CD4-positive, alpha-beta T cell (primary cell): ENCODE measurements at regions of chr6 and their contacts with region 1.

Region 1: DNA sequence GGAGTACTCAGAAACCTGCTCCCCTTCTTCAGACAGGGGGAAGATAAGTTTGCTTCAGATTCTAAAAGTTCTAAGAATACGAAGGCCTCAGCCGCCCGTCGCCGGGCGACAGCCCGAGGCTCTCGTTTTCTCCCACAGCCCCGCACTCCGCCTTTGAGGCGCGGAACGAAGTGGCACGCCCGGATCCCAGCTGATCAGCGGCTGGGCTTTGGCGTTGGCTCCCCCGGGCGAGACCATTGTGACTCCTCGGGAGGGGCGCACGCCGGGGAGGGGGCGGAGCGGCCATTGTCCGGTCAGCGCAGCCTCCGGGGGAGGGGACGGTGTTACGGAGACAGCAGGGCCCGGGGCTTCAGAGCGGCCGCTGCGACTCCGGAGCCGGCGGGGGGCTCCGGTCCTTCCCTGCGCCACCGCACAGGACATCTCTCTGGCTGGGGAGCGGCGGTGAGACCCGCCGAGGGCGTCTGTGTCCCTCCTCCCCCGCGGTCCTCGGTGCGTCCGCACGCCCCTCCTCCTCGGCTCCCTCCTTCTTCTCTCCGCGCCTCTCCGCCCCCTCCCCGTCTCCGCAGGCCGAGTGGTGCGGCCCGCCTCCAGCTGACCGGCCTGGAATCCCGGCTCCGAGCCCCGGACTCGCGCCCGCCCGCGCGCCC is at the start of gene ZFAND3:
- DNase-seq: peak; percentile 85 to 96 (median 90)
- ATAC-seq: peak; percentile 81
- H3K4me3 ChIP-seq: peak within 1 kb of the TSS; percentile 83
- H3K4me3 Mint-ChIP-seq: peak within 1 kb of the TSS; percentile 97
- H3K27ac ChIP-seq: peak within 1 kb of the TSS; percentile 89 to 94
- H3K27ac Mint-ChIP-seq: peak within 1 kb of the TSS; percentile 98
- H3K4me1 ChIP-seq: peaks cover 40% of the 10 kb centered on the region
- H3K4me1 Mint-ChIP-seq: peaks cover 64% of the 10 kb centered on the region
- H3K27me3 ChIP-seq: no peaks in the 10 kb centered on the region
- H3K27me3 Mint-ChIP-seq: no peaks in the 10 kb centered on the region
- CTCF ChIP-seq: no peak
- total RNA-seq, gene ZFAND3: 34.4 to 37.0 TPM

Region 2: DNA sequence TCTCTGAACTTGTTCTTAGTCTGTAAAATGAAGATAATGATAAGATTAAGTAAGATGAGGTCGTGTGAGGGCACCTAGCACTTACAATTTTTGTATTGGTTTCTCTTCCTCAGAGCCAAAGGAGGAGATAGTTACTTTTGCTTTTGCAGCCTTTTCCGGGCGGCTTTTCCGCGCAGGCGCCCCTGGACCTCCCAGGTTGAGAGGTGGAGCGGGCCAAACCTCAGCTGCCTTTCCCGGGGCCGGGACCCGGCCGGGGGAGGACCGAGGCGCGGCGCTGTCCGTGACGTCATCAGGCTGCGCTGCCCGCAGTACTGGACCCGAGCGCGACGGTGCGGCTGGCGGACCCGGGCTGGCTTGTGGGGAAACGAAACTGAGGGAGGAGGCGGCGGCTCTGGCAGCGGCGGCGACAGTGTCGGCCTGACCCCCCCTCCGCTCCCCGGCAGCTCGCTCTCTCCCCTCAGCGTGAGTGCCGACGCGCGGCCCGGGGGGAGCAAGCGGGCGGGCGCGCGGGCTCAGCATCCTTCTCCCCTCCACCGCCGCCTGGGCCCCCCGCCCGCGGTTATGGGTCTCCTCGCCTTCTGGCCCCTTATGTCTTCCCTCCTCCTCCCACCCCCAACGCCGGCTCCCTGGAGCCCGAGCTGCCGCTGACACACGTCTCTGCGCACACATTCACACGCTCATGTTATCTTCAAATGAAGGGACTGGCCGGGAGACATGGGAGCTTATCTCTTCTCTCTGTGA is 386.2 kb before region 1 on chr6 and contains the start of gene CMTR1:
- CTCF ChIA-PET with region 1: no interaction called
- POLR2A ChIA-PET with region 1: interaction called, 7 read pairs
- intact Hi-C with region 1: loop called in 1 of 2 experiments (anchors 2 kb)
- DNase-seq: peak; percentile 91 to 99 (median 96)
- ATAC-seq: peak; percentile 89
- H3K4me3 ChIP-seq: peak within 1 kb of the TSS; percentile 98
- H3K4me3 Mint-ChIP-seq: peak within 1 kb of the TSS; percentile 95
- H3K27ac ChIP-seq: peak within 1 kb of the TSS; percentile 91
- H3K27ac Mint-ChIP-seq: peak within 1 kb of the TSS; percentile 95
- H3K4me1 ChIP-seq: peaks cover 29% of the 10 kb centered on the region
- H3K4me1 Mint-ChIP-seq: peaks cover 45% of the 10 kb centered on the region
- H3K27me3 ChIP-seq: no peaks in the 10 kb centered on the region
- H3K27me3 Mint-ChIP-seq: peaks cover 6% of the 10 kb centered on the region
- CTCF ChIP-seq: no peak
- total RNA-seq, gene CMTR1: 79.7 to 80.3 TPM

Region 3: GRCh38 chr6:37516076-37516919 is 303.0 kb before region 1 on chr6:
- CTCF ChIA-PET with region 1: no interaction called
- POLR2A ChIA-PET with region 1: interaction called, 4 read pairs
- intact Hi-C with region 1: loop called in 1 of 2 experiments (anchors 5 kb)
- DNase-seq: peak; percentile 80 to 99 (median 86)
- ATAC-seq: peak; percentile 83
- H3K4me3 ChIP-seq: peak overlapping the region; percentile 64
- H3K4me3 Mint-ChIP-seq: peak overlapping the region; percentile 83
- H3K27ac ChIP-seq: peak overlapping the region; percentile 93 to 100
- H3K27ac Mint-ChIP-seq: peak overlapping the region; percentile 97
- H3K4me1 ChIP-seq: peaks cover 94% of the 10 kb centered on the region
- H3K4me1 Mint-ChIP-seq: peaks cover 76% of the 10 kb centered on the region
- H3K27me3 ChIP-seq: no peaks in the 10 kb centered on the region
- H3K27me3 Mint-ChIP-seq: no peaks in the 10 kb centered on the region
- CTCF ChIP-seq: no peak

Region 4: GRCh38 chr6:37663019-37663810 is 156.1 kb before region 1 on chr6:
- CTCF ChIA-PET with region 1: no interaction called
- POLR2A ChIA-PET with region 1: no interaction called
- intact Hi-C with region 1: no loop called
- DNase-seq: no peak
- ATAC-seq: no peak
- H3K4me3 ChIP-seq: no peak overlapping the region
- H3K4me3 Mint-ChIP-seq: no peak overlapping the region
- H3K27ac ChIP-seq: no peak overlapping the region
- H3K27ac Mint-ChIP-seq: no peak overlapping the region
- H3K4me1 ChIP-seq: no peaks in the 10 kb centered on the region
- H3K4me1 Mint-ChIP-seq: no peaks in the 10 kb centered on the region
- H3K27me3 ChIP-seq: no peaks in the 10 kb centered on the region
- H3K27me3 Mint-ChIP-seq: peaks cover 7% of the 10 kb centered on the region
- CTCF ChIP-seq: no peak

Region 5: DNA sequence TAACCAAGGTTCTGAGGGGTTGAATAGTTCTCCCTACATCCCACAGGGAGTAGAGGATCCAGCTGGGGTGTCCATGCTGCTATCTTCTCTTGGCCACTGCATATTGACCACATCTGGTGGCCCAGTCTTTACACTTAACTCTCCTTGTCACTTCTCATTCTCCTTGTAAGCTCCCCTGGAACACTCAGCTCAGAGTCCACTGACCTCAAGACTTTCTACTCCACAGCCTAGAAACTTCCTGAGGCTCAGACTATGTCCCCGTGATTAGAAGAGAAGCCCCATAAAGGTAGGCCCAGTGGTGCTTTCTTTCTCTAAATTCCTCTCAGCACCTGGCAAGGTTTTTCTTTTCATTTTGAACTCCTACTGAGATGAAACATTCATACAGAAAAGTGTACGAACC is 13.1 kb before region 1 on chr6:
- CTCF ChIA-PET with region 1: no interaction called
- POLR2A ChIA-PET with region 1: interaction called, 10 read pairs
- intact Hi-C with region 1: no loop called
- DNase-seq: no peak
- ATAC-seq: no peak
- H3K4me3 ChIP-seq: no peak overlapping the region
- H3K4me3 Mint-ChIP-seq: no peak overlapping the region
- H3K27ac ChIP-seq: no peak overlapping the region
- H3K27ac Mint-ChIP-seq: no peak overlapping the region
- H3K4me1 ChIP-seq: no peaks in the 10 kb centered on the region
- H3K4me1 Mint-ChIP-seq: no peaks in the 10 kb centered on the region
- H3K27me3 ChIP-seq: no peaks in the 10 kb centered on the region
- H3K27me3 Mint-ChIP-seq: no peaks in the 10 kb centered on the region
- CTCF ChIP-seq: no peak

Region 6: DNA sequence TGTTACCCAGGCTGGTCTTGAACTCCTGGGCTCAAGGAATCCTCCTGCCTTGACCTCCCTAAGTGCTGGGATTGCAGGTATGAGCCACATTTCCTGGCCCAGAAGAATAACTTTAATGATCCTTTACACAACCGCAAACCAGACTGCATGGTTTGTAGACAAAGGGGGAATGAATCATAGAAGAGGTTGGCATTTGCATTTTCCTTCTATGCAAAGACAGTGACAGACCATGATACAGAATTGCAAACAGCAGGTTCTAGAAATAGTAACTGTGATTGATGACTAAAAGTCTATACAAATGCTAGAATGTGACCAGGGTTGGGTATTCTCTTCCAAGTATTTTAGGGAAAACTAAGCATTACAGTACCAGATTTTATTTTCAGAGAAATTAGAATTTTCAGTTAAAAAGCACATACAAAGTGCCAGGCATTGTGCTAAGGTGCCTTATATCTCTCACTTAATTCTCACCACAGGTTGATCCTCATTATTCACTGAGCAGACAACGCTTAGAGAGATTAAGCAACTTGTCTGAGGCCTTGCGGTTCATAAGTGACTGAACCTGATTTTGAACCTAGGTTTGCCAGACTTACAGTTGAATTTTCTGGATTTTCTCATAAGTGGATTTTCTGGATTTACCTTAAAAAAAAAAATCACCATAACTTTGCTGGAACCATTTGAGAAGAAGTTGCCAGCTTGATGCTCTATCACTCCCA is 146.8 kb after region 1 on chr6:
- CTCF ChIA-PET with region 1: no interaction called
- POLR2A ChIA-PET with region 1: no interaction called
- intact Hi-C with region 1: no loop called
- DNase-seq: no peak
- ATAC-seq: no peak
- H3K4me3 ChIP-seq: no peak overlapping the region
- H3K4me3 Mint-ChIP-seq: no peak overlapping the region
- H3K27ac ChIP-seq: no peak overlapping the region
- H3K27ac Mint-ChIP-seq: no peak overlapping the region
- H3K4me1 ChIP-seq: peaks cover 3% of the 10 kb centered on the region
- H3K4me1 Mint-ChIP-seq: peaks cover 90% of the 10 kb centered on the region
- H3K27me3 ChIP-seq: no peaks in the 10 kb centered on the region
- H3K27me3 Mint-ChIP-seq: no peaks in the 10 kb centered on the region
- CTCF ChIP-seq: no peak

Region 7: GRCh38 chr6:38639498-38640215 is 820.4 kb after region 1 on chr6 and contains the start of gene BTBD9:
- CTCF ChIA-PET with region 1: no interaction called
- POLR2A ChIA-PET with region 1: interaction called, 13 read pairs
- intact Hi-C with region 1: loop called in 1 of 2 experiments (anchors 2 kb)
- DNase-seq: peak; percentile 66 to 95 (median 80)
- ATAC-seq: peak; percentile 75
- H3K4me3 ChIP-seq: peak within 1 kb of the TSS; percentile 78
- H3K4me3 Mint-ChIP-seq: peak within 1 kb of the TSS; percentile 90
- H3K27ac ChIP-seq: peak within 1 kb of the TSS; percentile 94 to 99
- H3K27ac Mint-ChIP-seq: peak within 1 kb of the TSS; percentile 84
- H3K4me1 ChIP-seq: peaks cover 20% of the 10 kb centered on the region
- H3K4me1 Mint-ChIP-seq: peaks cover 52% of the 10 kb centered on the region
- H3K27me3 ChIP-seq: no peaks in the 10 kb centered on the region
- H3K27me3 Mint-ChIP-seq: no peaks in the 10 kb centered on the region
- CTCF ChIP-seq: no peak
- total RNA-seq, gene BTBD9: 58.7 to 59.3 TPM

Region 8: GRCh38 chr6:39114704-39115599 is 1295.7 kb after region 1 on chr6 and contains the start of gene SAYSD1:
- CTCF ChIA-PET with region 1: no interaction called
- POLR2A ChIA-PET with region 1: no interaction called
- intact Hi-C with region 1: loop called in 1 of 2 experiments (anchors 10 kb)
- DNase-seq: peak; percentile 83 to 98 (median 91)
- ATAC-seq: peak; percentile 75
- H3K4me3 ChIP-seq: peak within 1 kb of the TSS; percentile 72
- H3K4me3 Mint-ChIP-seq: peak within 1 kb of the TSS; percentile 98
- H3K27ac ChIP-seq: peak within 1 kb of the TSS; percentile 74 to 90
- H3K27ac Mint-ChIP-seq: peak within 1 kb of the TSS; percentile 92
- H3K4me1 ChIP-seq: peaks cover 11% of the 10 kb centered on the region
- H3K4me1 Mint-ChIP-seq: peaks cover 56% of the 10 kb centered on the region
- H3K27me3 ChIP-seq: no peaks in the 10 kb centered on the region
- H3K27me3 Mint-ChIP-seq: no peaks in the 10 kb centered on the region
- CTCF ChIP-seq: no peak
- total RNA-seq, gene SAYSD1: 18.7 to 21.3 TPM